CD8-positive, alpha-beta T cell (primary cell): ENCODE measurements at regions of chr14 and their contacts with region 1.

Region 1: DNA sequence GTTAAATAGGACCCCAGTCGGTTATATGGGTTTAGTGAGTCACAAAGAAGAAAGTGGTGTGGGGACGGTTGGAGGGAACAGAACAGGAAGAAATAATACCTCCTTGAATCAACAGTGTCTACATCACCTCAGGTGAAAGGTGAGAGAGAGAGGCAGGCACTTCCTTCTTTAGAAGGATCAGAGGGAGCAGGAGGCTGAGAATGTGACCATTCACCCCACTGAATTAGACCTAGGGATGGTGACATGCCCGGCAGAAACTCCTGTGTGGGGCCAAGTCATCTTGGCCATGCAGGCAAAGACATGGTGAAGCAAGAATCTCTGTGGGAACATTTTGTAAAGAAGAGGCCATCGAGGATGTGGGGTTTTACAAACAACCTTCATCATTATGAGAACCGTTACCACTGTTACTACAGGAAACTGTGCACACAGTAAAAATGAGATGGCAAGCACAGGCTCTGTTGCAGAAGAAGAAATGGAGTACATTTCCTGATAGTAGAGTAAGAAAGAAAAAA is 1196.9 kb downstream of the VRK1 start:
- DNase-seq: peak in 7 of 9 experiments; percentile 7 to 79 (median 58)
- ATAC-seq: peak; percentile 81
- H3K4me3 ChIP-seq: no peak overlapping the region
- H3K4me3 Mint-ChIP-seq: peak overlapping the region; percentile 9
- H3K27ac ChIP-seq: peak overlapping the region; percentile 62 to 83
- H3K27ac Mint-ChIP-seq: peak overlapping the region; percentile 98
- H3K4me1 ChIP-seq: peaks cover 66% of the 10 kb centered on the region
- H3K4me1 Mint-ChIP-seq: peaks cover 84% of the 10 kb centered on the region
- H3K27me3 ChIP-seq: no peaks in the 10 kb centered on the region
- H3K27me3 Mint-ChIP-seq: no peaks in the 10 kb centered on the region
- CTCF ChIP-seq: no peak

Region 2: GRCh38 chr14:97900196-97900854 is 93.8 kb before region 1 on chr14:
- CTCF ChIA-PET with region 1: no interaction called
- POLR2A ChIA-PET with region 1: no interaction called
- intact Hi-C with region 1: no loop called
- DNase-seq: no peak
- ATAC-seq: no peak
- H3K4me3 ChIP-seq: no peak overlapping the region
- H3K4me3 Mint-ChIP-seq: no peak overlapping the region
- H3K27ac ChIP-seq: no peak overlapping the region
- H3K27ac Mint-ChIP-seq: peak overlapping the region; percentile 19
- H3K4me1 ChIP-seq: no peaks in the 10 kb centered on the region
- H3K4me1 Mint-ChIP-seq: peaks cover 9% of the 10 kb centered on the region
- H3K27me3 ChIP-seq: peaks cover 0 to 5% of the 10 kb centered on the region in 2 experiments
- H3K27me3 Mint-ChIP-seq: no peaks in the 10 kb centered on the region
- CTCF ChIP-seq: no peak

Region 3: DNA sequence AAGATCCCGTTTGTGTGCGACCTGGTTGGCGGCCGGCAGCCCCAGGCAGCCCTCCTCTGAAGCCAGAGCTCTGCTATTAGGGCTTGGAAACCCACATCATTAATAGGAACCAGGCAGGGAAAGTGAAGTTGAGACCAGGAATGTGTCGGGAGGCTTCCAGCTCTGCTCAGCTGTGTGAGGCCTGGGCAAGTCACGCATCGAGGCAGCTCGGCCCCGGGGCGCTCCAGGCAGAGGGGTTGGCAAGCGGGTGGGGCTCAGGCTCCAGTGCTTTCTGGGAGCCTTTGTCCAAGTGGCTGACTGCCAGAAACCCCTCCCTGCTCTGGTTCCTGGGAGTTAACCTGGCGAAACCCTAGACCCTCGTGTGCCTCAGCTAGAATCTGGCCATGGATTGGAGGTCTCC is 45.2 kb before region 1 on chr14:
- CTCF ChIA-PET with region 1: no interaction called
- POLR2A ChIA-PET with region 1: no interaction called
- intact Hi-C with region 1: no loop called
- DNase-seq: no peak
- ATAC-seq: no peak
- H3K4me3 ChIP-seq: no peak overlapping the region
- H3K4me3 Mint-ChIP-seq: no peak overlapping the region
- H3K27ac ChIP-seq: no peak overlapping the region
- H3K27ac Mint-ChIP-seq: no peak overlapping the region
- H3K4me1 ChIP-seq: no peaks in the 10 kb centered on the region
- H3K4me1 Mint-ChIP-seq: peaks cover 58% of the 10 kb centered on the region
- H3K27me3 ChIP-seq: no peaks in the 10 kb centered on the region
- H3K27me3 Mint-ChIP-seq: no peaks in the 10 kb centered on the region
- CTCF ChIP-seq: no peak

Region 4: DNA sequence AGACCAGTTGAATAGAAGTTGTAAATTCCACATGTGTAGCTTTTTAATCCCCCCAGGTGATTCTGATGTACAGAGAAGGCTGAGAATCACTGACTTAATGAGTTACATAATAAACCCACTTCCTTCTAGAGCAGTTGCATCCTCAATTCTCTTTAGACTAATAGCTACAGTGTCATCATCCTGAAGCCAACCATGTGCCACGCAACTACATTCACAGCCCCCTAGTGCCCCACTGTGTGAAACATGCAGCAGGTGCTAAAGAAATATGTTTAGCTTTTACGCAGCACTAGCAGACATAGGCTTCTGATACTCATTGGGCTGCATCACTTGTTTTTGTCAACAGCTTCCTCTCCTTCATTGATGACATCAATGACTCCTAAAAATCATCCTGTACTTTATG is 109.6 kb after region 1 on chr14:
- CTCF ChIA-PET with region 1: no interaction called
- POLR2A ChIA-PET with region 1: no interaction called
- intact Hi-C with region 1: loop called in 1 of 2 experiments (anchors 5 kb)
- DNase-seq: peak; percentile 5 to 86 (median 42)
- ATAC-seq: peak; percentile 95
- H3K4me3 ChIP-seq: no peak overlapping the region
- H3K4me3 Mint-ChIP-seq: no peak overlapping the region
- H3K27ac ChIP-seq: no peak overlapping the region
- H3K27ac Mint-ChIP-seq: peak overlapping the region; percentile 83
- H3K4me1 ChIP-seq: peaks cover 22% of the 10 kb centered on the region
- H3K4me1 Mint-ChIP-seq: peaks cover 39% of the 10 kb centered on the region
- H3K27me3 ChIP-seq: no peaks in the 10 kb centered on the region
- H3K27me3 Mint-ChIP-seq: no peaks in the 10 kb centered on the region
- CTCF ChIP-seq: no peak